Posterior vena cava (tissue), 2 donors: ENCODE measurements at regions of chr2 and their contacts with region 1.

Region 1: GRCh38 chr2:112259509-112260294 is 4.9 kb upstream of the ZC3H8 start:
- DNase-seq: peak; percentile 96

Region 2: DNA sequence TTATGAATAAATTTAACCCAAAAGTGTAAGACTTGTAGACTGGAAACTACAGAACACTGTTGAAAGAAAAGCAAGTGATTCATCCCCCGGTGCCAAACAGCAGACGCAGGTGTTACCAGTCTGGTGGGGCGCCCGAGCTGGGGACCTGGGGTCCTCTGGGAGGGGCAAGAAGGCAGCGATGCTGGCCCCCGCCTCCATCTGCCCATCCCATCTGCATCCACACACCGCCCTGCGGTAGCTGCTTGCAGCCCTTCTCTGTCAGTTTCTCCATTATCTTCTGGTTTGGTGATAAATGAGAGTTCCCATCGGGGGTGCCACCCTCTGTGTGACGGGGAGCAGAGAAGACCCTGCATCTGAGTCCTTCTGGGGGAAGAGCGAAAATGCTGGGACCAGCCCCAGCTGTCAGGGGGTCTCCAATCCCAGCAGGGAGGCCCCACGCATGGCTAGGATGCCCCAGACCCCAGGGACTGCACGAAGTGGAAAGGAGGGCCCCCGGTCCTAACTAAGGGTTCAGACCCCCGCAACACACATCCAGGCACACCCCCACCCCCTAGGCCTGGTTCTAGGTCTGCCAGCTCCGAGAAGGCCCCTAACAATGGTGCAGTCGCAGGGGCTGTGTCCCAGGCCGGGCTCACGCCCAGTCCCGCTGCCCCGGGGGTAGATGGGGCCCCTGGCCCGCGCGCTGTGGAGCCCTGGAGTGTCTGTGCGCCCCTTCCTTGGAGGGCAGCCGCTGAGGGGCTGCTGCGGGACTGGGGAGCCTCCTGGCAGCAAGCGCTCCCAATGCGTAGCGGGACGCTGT is 174.4 kb after region 1 on chr2:
- intact Hi-C with region 1: loop called in 1 of 2 experiments (anchors 10 kb)
- DNase-seq: no peak

Region 3: GRCh38 chr2:114134146-114134545 is 1874.4 kb after region 1 on chr2:
- intact Hi-C with region 1: no loop called
- DNase-seq: no peak